PC-9 (cell line): ENCODE measurements at regions of chr16 and their contacts with region 1.

Region 1: DNA sequence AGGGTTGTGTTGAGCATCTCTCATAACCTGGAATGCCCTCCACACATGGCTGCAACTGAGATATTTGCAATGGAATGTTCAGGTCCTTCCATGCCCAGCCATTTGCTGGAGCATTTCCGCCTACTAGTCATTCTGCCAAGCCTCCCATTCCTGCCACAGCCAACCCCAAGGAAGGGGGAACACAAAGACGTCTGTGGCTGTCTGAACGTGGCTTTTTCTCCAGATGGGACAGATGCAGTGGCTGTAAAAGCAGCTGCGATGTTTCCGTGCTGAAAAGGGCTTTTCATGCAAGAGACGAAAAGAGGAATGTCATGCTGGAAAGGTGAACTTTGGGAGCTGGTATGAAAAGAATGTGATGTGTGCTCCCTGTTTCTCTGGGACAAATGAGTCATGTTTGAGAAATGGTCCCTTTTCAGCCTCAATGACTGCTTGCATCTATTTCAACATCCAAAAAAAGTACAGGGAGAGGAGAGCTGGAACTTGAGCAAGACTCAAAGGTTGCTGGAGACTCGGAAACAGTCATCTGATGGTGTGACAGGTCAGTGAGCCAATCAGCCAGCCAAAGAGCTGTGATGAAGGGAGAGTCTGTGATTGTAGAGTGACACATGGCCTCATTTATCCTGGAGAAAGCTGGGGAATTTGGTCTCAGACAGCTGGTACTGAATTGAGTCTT is 208.9 kb downstream of the SHISA9 start:
- DNase-seq: peak; percentile 88 to 99
- H3K4me3 ChIP-seq: peak overlapping the region; percentile 47; the same call in 1 of the 2 replicates
- H3K27ac ChIP-seq: peak overlapping the region; percentile 97
- H3K4me1 ChIP-seq: peaks cover 60% of the 10 kb centered on the region
- H3K27me3 ChIP-seq: no peaks in the 10 kb centered on the region
- CTCF ChIP-seq: no peak

Region 2: DNA sequence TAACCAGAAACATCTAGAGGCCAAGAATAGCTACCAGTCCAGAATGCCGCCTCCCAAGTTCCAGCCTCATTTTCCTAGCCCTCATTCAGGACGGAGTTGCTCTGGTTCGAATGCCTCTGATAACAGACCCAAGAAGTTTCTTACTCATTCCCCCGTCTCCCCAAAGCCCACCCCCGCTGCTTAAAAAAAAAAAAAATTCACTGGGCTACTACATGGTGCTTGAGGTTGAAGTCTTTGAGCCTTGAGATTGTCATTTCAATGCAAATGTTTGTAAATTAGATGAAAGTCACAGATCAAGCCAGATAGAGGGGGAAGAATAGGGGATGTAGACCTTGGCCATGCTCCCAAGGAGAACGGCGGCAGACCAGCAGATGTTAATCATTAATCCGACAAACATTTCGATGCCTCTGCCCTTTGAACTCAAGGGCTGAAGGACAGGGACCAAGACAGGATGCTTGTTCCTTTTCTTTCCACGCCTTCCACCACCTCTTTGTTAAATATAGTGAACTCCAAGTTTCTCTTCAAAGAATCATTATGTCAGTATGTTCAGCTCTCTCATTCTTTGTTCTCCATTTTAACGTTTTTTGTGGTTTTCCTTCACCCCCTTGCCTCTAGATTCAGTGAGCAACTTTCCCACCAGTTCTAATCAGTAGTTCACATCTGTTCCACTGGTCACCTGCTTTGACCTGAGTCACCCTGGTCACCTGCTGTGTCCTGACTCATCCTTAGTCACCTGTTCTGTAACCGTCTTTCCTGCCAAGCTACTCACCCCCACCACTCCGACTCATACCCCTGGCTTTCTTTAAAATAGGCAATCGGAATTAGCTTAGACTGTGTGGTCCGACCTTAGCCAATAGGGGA is 496.9 kb before region 1 on chr16:
- CTCF ChIA-PET with region 1: no interaction called
- POLR2A ChIA-PET with region 1: no interaction called
- intact Hi-C with region 1: loop called (anchors 2 kb)
- DNase-seq: peak; percentile 89 to 97
- H3K4me3 ChIP-seq: peak overlapping the region; percentile 46; the same call in 1 of the 2 replicates
- H3K27ac ChIP-seq: peak overlapping the region; percentile 100
- H3K4me1 ChIP-seq: peaks cover 55% of the 10 kb centered on the region
- H3K27me3 ChIP-seq: no peaks in the 10 kb centered on the region
- CTCF ChIP-seq: no peak

Region 3: DNA sequence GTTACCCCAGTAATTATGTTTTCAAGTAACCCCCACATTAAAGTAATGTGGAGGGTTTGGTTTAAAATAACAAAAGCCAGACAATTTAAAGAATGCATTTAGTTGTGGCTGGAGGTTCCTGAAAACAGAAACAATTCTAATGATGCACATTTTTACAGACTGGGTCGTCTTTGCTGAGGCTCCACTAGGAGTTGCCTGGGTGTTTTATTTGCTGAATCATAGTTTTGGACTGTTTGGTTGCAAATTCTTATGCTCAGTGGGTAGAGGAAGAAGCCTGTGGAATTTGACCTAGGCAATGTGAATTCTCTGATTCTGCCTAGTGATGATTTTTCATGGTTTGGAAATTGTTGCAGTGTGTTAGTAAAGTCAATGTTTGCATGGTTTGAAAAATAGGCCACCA is 192.6 kb before region 1 on chr16:
- CTCF ChIA-PET with region 1: no interaction called
- POLR2A ChIA-PET with region 1: no interaction called
- intact Hi-C with region 1: loop called (anchors 5 kb)
- DNase-seq: peak; percentile 21 to 55
- H3K4me3 ChIP-seq: no peak overlapping the region
- H3K27ac ChIP-seq: peak overlapping the region; percentile 77
- H3K4me1 ChIP-seq: peaks cover 18% of the 10 kb centered on the region
- H3K27me3 ChIP-seq: no peaks in the 10 kb centered on the region
- CTCF ChIP-seq: no peak

Region 4: DNA sequence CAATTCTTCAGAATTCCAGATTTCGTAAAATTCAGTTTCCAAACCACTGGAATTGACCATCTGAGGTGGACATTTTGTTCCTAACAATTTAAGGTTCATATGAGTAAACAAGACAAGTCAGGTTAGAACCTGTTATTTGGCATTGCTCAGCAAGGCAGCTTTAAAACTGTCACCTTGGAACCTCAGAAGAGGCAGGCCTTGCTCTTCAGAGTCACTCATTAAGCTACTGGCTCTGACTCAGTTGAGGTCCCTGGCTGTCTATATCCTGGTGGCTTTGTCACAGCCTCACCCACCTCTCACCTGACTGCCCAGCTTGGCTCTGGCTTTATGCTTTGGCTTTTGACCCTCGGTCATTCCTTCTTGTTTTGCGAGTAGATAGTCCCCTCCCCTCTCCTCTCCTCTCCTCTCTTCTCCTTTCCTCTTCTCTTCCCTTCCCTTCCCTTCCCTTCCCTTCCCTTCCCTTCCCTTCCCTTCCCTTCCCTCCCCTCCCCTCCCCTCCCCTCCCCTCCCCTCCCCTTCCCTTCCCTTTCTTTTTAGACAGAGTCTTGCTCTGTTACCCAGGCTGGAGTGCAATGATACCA is 29.5 kb after region 1 on chr16:
- CTCF ChIA-PET with region 1: no interaction called
- POLR2A ChIA-PET with region 1: interaction called, 12 read pairs
- intact Hi-C with region 1: no loop called
- DNase-seq: peak in 1 of 2 experiments; percentile 37
- H3K4me3 ChIP-seq: no peak overlapping the region
- H3K27ac ChIP-seq: no peak overlapping the region
- H3K4me1 ChIP-seq: no peaks in the 10 kb centered on the region
- H3K27me3 ChIP-seq: no peaks in the 10 kb centered on the region
- CTCF ChIP-seq: no peak

Region 5: DNA sequence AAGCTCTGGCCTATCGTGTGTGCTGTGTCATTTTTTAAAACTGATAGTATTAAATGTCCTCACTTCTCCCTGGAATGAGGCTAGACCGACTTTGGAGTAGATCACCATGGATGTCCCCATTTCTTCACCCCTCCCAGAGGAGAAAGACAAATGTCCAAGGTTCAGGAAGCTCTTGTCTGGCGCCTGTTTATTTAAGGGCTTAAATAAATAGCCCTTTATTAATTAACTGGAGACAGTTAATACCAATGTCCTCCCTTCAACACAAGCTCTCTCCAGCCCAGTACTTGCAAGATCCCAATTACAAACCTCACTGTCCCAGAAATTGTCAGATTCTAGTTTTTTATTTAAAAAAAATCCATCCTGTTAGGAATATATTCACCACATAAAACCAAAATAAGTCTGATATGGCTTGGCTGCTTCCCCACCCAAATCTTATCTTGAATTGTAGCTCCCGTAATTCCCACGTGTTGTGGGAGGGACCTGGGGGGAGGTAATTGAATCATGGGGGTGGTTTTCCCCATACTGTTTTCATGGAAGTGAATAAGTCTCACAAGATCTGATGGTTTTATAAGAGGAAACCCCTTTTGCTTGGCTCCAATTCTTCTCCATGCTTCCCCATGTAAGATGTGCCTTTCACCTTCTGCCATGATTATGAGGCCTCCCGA is 135.6 kb after region 1 on chr16:
- CTCF ChIA-PET with region 1: no interaction called
- POLR2A ChIA-PET with region 1: no interaction called
- intact Hi-C with region 1: no loop called
- DNase-seq: no peak
- H3K4me3 ChIP-seq: no peak overlapping the region
- H3K27ac ChIP-seq: no peak overlapping the region
- H3K4me1 ChIP-seq: no peaks in the 10 kb centered on the region
- H3K27me3 ChIP-seq: no peaks in the 10 kb centered on the region
- CTCF ChIP-seq: no peak

Region 6: GRCh38 chr16:13307255-13307654 is 197.0 kb after region 1 on chr16:
- CTCF ChIA-PET with region 1: no interaction called
- POLR2A ChIA-PET with region 1: interaction called, 4 read pairs
- intact Hi-C with region 1: loop called (anchors 1 kb)
- DNase-seq: peak; percentile 86 to 99
- H3K4me3 ChIP-seq: no peak overlapping the region
- H3K27ac ChIP-seq: peak overlapping the region; percentile 88
- H3K4me1 ChIP-seq: peaks cover 44% of the 10 kb centered on the region
- H3K27me3 ChIP-seq: no peaks in the 10 kb centered on the region
- CTCF ChIP-seq: no peak

Region 7: GRCh38 chr16:13453938-13454553 is 343.8 kb after region 1 on chr16:
- CTCF ChIA-PET with region 1: no interaction called
- POLR2A ChIA-PET with region 1: no interaction called
- intact Hi-C with region 1: loop called (anchors 2 kb)
- DNase-seq: peak in 1 of 2 experiments; percentile 56
- H3K4me3 ChIP-seq: no peak overlapping the region
- H3K27ac ChIP-seq: no peak overlapping the region
- H3K4me1 ChIP-seq: no peaks in the 10 kb centered on the region
- H3K27me3 ChIP-seq: no peaks in the 10 kb centered on the region
- CTCF ChIP-seq: peak; percentile 90